Colonic mucosa (tissue), 4 donors: ENCODE measurements at regions of chr11 and their contacts with region 1.

Region 1: GRCh38 chr11:9613118-9613829 is 39.8 kb downstream of the WEE1 start:
- DNase-seq: peak; percentile 97
- H3K4me3 ChIP-seq: peak overlapping the region; percentile 48
- H3K27ac ChIP-seq: peak overlapping the region; percentile 87
- H3K4me1 ChIP-seq: peaks cover 4% of the 10 kb centered on the region
- H3K27me3 ChIP-seq: no peaks in the 10 kb centered on the region
- CTCF ChIP-seq: peak; percentile 95

Region 2: DNA sequence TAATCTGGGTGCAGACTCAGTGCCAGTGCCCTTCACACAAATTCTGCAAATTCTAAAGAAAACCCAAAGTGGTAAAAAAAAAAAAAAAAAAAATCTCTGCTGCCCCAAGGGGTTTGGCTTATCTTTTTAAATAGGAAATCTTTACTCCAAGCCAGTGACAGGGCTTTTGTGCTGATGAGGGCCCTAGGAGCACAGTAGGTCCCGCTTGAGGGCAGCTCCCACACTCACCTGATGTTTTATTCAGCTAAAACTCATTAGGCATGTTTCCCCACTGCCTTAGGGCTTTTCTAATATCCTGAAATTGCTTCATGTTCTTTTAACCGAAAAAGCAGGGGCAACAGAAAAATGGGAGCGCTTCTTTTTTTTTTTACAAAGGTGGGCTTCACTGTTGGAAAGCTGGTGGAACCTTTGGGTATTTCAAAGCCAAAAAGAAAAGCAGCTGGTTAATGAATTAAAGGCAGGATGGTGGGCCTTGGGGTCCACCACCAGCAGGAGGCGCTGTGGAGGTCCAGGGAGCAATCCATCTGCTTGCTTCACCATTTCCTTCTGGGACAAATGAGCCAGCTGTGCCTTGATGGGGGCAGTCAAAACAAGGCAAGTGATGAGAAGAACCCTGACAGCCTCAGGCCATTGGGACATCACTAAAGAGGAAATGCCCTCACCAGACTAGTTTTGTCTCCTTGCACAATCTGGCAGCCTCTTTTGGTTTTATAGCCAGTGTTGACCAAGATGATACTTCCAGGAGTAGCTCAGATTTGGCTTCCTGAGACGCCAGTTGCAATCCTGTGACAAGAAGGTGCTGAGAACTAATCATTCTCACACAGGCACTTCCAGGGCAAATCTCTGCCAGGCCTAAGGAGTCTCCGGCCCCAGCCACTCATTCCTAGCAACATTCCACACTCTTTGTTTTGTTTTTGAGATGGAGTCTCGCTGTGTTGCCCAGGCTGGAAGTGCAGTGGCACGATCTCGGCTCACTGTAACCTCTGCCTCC is 78.2 kb before region 1 on chr11:
- intact Hi-C with region 1: loop called (anchors 5 kb)
- DNase-seq: peak; percentile 84
- H3K4me3 ChIP-seq: no peak overlapping the region
- H3K27ac ChIP-seq: no peak overlapping the region
- H3K4me1 ChIP-seq: no peaks in the 10 kb centered on the region
- H3K27me3 ChIP-seq: no peaks in the 10 kb centered on the region
- CTCF ChIP-seq: peak; percentile 80

Region 3: DNA sequence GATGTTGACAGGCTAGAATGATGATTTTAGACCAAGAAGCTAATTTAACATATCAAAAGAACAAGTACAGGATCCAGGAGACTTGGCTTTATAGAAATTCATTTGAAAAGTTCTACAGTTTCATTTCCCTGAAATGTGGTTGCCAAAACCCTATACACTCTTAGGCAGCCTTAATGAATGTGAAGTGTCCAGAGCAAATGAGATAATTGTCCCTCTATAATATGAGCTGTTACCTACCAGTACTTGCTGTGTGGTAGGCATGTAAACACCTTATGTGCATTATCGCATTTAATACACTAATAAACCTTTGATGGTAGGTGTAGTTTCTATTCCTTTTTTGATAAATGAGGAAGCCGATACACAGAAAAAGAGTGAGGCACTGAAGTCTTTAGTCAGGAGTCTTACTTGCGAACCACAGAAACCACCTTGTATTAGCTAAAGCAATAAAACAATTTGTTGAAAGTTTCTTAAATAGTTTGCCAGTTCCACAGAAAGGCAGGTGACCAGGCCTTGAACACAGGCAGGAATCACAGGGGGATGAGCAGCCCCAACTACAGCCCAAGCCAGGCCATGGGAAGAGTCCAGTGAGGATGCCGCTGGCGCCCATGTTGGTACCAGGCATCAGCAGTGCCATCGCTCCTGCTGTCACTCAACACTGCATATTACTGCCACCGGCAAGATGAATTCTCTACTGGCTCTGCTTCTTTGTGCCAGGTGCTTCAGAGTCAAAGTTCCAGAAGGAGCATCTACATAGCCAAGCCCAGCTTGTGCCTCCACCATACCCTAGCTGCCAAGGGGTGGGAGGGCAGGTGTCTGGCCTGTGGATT is 132.3 kb after region 1 on chr11:
- intact Hi-C with region 1: loop called (anchors 2 kb)
- DNase-seq: no peak
- H3K4me3 ChIP-seq: no peak overlapping the region
- H3K27ac ChIP-seq: no peak overlapping the region
- H3K4me1 ChIP-seq: no peaks in the 10 kb centered on the region
- H3K27me3 ChIP-seq: no peaks in the 10 kb centered on the region
- CTCF ChIP-seq: no peak